ENCODE measurements at regions of chr3 and their contacts with region 1.

Region 1: GRCh38 chr3:15361494-15362212 is 29.3 kb upstream of the SH3BP5 start:
- DNase-seq: no peak
- ATAC-seq: peak; percentile 46
- H3K4me3 ChIP-seq: peak overlapping the region in 1 of 2 experiments; percentile 12; a peak in 1 of 4 replicates
- H3K27ac ChIP-seq: no peak overlapping the region
- H3K4me1 ChIP-seq: peaks cover 10 to 37% of the 10 kb centered on the region in 2 experiments
- H3K27me3 ChIP-seq: no peaks in the 10 kb centered on the region
- CTCF ChIP-seq: no peak
- POLR2A ChIP-seq: no peak
- RAD21 ChIP-seq: no peak

Region 2: GRCh38 chr3:15159501-15160136 is 202.0 kb before region 1 on chr3:
- CTCF ChIA-PET with region 1: no interaction called
- POLR2A ChIA-PET with region 1: no interaction called
- RAD21 ChIA-PET with region 1: no interaction called
- intact Hi-C with region 1: no loop called
- DNase-seq: no peak
- ATAC-seq: no peak
- H3K4me3 ChIP-seq: no peak overlapping the region
- H3K27ac ChIP-seq: no peak overlapping the region
- H3K4me1 ChIP-seq: no peaks in the 10 kb centered on the region
- H3K27me3 ChIP-seq: peaks cover 9% of the 10 kb centered on the region; the same call in 1 of the 2 replicates
- CTCF ChIP-seq: no peak
- POLR2A ChIP-seq: no peak
- RAD21 ChIP-seq: no peak

Region 3: GRCh38 chr3:15204005-15204404 is 157.6 kb before region 1 on chr3:
- CTCF ChIA-PET with region 1: no interaction called
- POLR2A ChIA-PET with region 1: no interaction called
- RAD21 ChIA-PET with region 1: no interaction called
- intact Hi-C with region 1: no loop called
- DNase-seq: no peak
- ATAC-seq: no peak
- H3K4me3 ChIP-seq: no peak overlapping the region
- H3K27ac ChIP-seq: no peak overlapping the region
- H3K4me1 ChIP-seq: peaks cover 6 to 18% of the 10 kb centered on the region in 2 experiments; a peak in 3 of 4 replicates
- H3K27me3 ChIP-seq: no peaks in the 10 kb centered on the region
- CTCF ChIP-seq: no peak
- POLR2A ChIP-seq: no peak
- RAD21 ChIP-seq: no peak

Region 4: DNA sequence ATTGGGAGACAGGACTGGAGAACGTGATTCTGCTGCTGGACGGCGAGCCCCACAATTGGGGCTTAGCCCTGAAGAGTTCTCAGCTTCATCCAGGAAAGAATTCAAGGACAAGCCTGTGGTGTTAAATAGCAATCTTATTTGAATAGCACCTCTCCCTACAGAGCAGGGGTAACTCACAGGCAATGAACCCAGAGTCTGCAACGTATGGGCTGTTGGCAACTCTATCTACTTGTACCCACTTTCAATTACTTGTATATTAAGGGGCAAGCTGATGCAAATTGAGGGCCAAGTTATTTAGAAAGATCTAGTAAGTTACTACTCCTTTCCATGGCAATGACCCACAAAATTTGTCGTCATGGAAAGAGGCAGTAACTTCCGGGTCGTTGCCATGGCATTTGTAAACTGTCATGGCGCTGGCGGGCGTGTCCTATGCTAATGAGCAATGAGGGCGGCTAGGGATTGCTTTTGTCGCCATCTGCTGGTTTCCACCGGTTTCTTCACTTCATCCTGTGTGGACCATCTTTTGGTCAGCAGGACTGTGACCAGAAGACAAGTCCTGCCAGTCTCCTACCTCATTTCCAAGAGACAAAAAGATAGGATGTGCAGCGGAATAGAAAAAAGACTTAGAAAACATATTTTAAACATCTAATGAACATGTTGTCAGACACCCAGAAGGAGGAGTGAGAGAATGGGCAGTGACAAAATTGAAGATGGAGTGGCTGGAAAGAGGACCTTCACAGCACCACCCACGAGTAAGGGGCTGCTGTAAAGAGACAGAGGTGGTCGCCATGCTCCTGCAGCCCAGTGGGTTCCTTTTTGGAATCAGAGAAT is 16.5 kb after region 1 on chr3:
- CTCF ChIA-PET with region 1: no interaction called
- POLR2A ChIA-PET with region 1: no interaction called
- RAD21 ChIA-PET with region 1: no interaction called
- intact Hi-C with region 1: loop called (anchors 1 kb)
- DNase-seq: peak; percentile 91
- ATAC-seq: peak; percentile 97
- H3K4me3 ChIP-seq: no peak overlapping the region
- H3K27ac ChIP-seq: peak overlapping the region; percentile 39; the same call in 1 of the 2 replicates
- H3K4me1 ChIP-seq: peaks cover 0 to 11% of the 10 kb centered on the region in 2 experiments; a peak in 2 of 4 replicates
- H3K27me3 ChIP-seq: no peaks in the 10 kb centered on the region
- CTCF ChIP-seq: peak; percentile 91 to 92 (median 91)
- POLR2A ChIP-seq: no peak
- RAD21 ChIP-seq: peak; percentile 98

Region 5: GRCh38 chr3:15427182-15427880 is 65.7 kb after region 1 on chr3 and contains the starts of genes EAF1 and METTL6:
- CTCF ChIA-PET with region 1: no interaction called
- POLR2A ChIA-PET with region 1: no interaction called
- RAD21 ChIA-PET with region 1: no interaction called
- intact Hi-C with region 1: no loop called
- DNase-seq: peak; percentile 58
- ATAC-seq: peak; percentile 91
- H3K4me3 ChIP-seq: peak within 1 kb of the TSS; percentile 99
- H3K27ac ChIP-seq: peak within 1 kb of the TSS; percentile 77
- H3K4me1 ChIP-seq: peaks cover 13 to 16% of the 10 kb centered on the region in 2 experiments
- H3K27me3 ChIP-seq: no peaks in the 10 kb centered on the region
- CTCF ChIP-seq: peak in 1 of 3 experiments; percentile 3; a peak in 1 of 6 replicates
- POLR2A ChIP-seq: peak; percentile 55
- RAD21 ChIP-seq: no peak
- total RNA-seq, gene EAF1: 32.1 TPM
- total RNA-seq, gene METTL6: 14.7 TPM

Measured in HCT116 (cell line).